Activated CD4-positive, alpha-beta T cell treated with anti-CD3 and anti-CD28 coated beads for 36 hours (primary cell): ENCODE measurements at regions of chr12 and their contacts with region 1.

Region 1: GRCh38 chr12:65306366-65307168 is 28.1 kb downstream of the MSRB3 start:
- DNase-seq: peak; percentile 12
- ATAC-seq: no peak
- H3K4me3 Mint-ChIP-seq: no peak overlapping the region
- H3K27ac Mint-ChIP-seq: no peak overlapping the region
- H3K4me1 Mint-ChIP-seq: peaks cover 7% of the 10 kb centered on the region
- H3K27me3 Mint-ChIP-seq: peaks cover 12% of the 10 kb centered on the region

Region 2: DNA sequence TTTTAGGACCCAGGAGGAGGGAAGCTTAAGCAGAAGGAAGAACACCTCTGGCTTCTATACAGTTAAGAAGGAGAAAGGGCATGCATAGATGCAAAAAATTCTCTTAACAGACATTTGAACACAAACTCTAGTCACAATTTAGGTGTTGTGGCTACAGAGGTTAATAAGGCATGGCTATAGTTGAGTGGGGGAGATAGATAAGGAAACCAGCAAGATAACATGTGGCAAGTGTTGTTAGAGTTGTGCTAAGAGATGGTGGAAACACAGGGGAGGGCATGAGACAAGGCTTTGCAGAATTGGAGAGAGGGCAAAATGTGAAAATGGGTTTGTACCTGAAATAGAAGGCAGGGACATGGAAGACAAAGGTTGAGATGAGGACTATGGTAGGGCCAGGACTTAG is 60.8 kb after region 1 on chr12:
- CTCF ChIA-PET with region 1: no interaction called
- POLR2A ChIA-PET with region 1: no interaction called
- intact Hi-C with region 1: no loop called
- DNase-seq: no peak
- ATAC-seq: no peak
- H3K4me3 Mint-ChIP-seq: no peak overlapping the region
- H3K27ac Mint-ChIP-seq: no peak overlapping the region
- H3K4me1 Mint-ChIP-seq: no peaks in the 10 kb centered on the region
- H3K27me3 Mint-ChIP-seq: no peaks in the 10 kb centered on the region

Region 3: GRCh38 chr12:65986047-65986446 is 679.5 kb after region 1 on chr12:
- CTCF ChIA-PET with region 1: no interaction called
- POLR2A ChIA-PET with region 1: no interaction called
- intact Hi-C with region 1: loop called in 1 of 2 experiments (anchors 5 kb)
- DNase-seq: no peak
- ATAC-seq: no peak
- H3K4me3 Mint-ChIP-seq: no peak overlapping the region
- H3K27ac Mint-ChIP-seq: no peak overlapping the region
- H3K4me1 Mint-ChIP-seq: no peaks in the 10 kb centered on the region
- H3K27me3 Mint-ChIP-seq: peaks cover 5% of the 10 kb centered on the region

Region 4: GRCh38 chr12:66035288-66035966 is 728.9 kb after region 1 on chr12:
- CTCF ChIA-PET with region 1: no interaction called
- POLR2A ChIA-PET with region 1: no interaction called
- intact Hi-C with region 1: loop called in 1 of 2 experiments (anchors 2 kb)
- DNase-seq: no peak
- ATAC-seq: no peak
- H3K4me3 Mint-ChIP-seq: no peak overlapping the region
- H3K27ac Mint-ChIP-seq: no peak overlapping the region
- H3K4me1 Mint-ChIP-seq: no peaks in the 10 kb centered on the region
- H3K27me3 Mint-ChIP-seq: peaks cover 22% of the 10 kb centered on the region

Region 5: DNA sequence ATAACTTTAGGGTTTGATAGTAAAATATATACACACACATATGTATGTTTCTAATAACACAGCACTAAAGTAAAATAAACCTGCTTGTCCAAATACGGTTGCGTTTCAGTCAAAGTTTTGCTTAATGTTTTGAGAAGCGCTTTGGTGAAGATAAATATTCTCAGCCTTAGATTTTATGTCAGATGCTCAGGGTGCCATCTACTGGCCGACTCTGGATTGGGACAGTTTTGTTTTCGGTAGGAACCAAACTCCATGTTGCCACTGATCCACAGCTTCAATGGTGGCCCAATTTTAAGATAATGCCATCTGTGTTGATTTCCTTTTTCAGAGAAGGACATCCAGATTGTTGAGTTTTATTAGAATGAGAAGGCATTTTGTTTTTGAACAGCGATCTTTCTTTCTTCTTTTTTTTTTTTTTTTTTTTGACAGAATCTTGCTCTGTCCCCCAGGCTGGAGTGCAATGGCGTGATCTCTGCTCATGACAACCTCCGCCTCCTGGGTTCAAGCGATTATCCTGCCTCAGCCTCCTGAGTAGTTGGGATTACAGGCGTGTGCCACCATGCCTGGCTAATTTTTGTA is 780.9 kb after region 1 on chr12:
- CTCF ChIA-PET with region 1: no interaction called
- POLR2A ChIA-PET with region 1: no interaction called
- intact Hi-C with region 1: loop called (anchors 2 to 5 kb)
- DNase-seq: peak; percentile 76
- ATAC-seq: peak; percentile 60
- H3K4me3 Mint-ChIP-seq: no peak overlapping the region
- H3K27ac Mint-ChIP-seq: no peak overlapping the region
- H3K4me1 Mint-ChIP-seq: no peaks in the 10 kb centered on the region
- H3K27me3 Mint-ChIP-seq: peaks cover 15% of the 10 kb centered on the region

Region 6: GRCh38 chr12:66107451-66107915 is 800.9 kb after region 1 on chr12:
- CTCF ChIA-PET with region 1: interaction called, 3 read pairs
- POLR2A ChIA-PET with region 1: no interaction called
- intact Hi-C with region 1: loop called (anchors 5 kb)
- DNase-seq: peak; percentile 51
- ATAC-seq: peak; percentile 92
- H3K4me3 Mint-ChIP-seq: no peak overlapping the region
- H3K27ac Mint-ChIP-seq: no peak overlapping the region
- H3K4me1 Mint-ChIP-seq: peaks cover 2% of the 10 kb centered on the region
- H3K27me3 Mint-ChIP-seq: peaks cover 10% of the 10 kb centered on the region